Tibial artery (tissue), 4 donors: ENCODE measurements at regions of chr19 and their contacts with region 1.

Region 1: GRCh38 chr19:17138937-17139598 is 63.5 kb downstream of the MYO9B start:
- DNase-seq: no peak
- H3K4me3 ChIP-seq: no peak overlapping the region
- H3K27ac ChIP-seq: peak overlapping the region; percentile 47 to 93
- H3K4me1 ChIP-seq: peaks cover 13 to 60% (median 33%) of the 10 kb centered on the region in 4 donors
- H3K27me3 ChIP-seq: no peaks in the 10 kb centered on the region
- CTCF ChIP-seq: no peak

Region 2: GRCh38 chr19:17127671-17128070 is 11.4 kb before region 1 on chr19:
- intact Hi-C with region 1: loop called (anchors 2 kb)
- DNase-seq: no peak
- H3K4me3 ChIP-seq: no peak overlapping the region
- H3K27ac ChIP-seq: peak overlapping the region; percentile 84 to 89
- H3K4me1 ChIP-seq: peaks cover 0 to 37% (median 24%) of the 10 kb centered on the region in 4 donors
- H3K27me3 ChIP-seq: no peaks in the 10 kb centered on the region
- CTCF ChIP-seq: no peak